GM10248 (cell line): ENCODE measurements at regions of chr1 and their contacts with region 1.

Region 1: DNA sequence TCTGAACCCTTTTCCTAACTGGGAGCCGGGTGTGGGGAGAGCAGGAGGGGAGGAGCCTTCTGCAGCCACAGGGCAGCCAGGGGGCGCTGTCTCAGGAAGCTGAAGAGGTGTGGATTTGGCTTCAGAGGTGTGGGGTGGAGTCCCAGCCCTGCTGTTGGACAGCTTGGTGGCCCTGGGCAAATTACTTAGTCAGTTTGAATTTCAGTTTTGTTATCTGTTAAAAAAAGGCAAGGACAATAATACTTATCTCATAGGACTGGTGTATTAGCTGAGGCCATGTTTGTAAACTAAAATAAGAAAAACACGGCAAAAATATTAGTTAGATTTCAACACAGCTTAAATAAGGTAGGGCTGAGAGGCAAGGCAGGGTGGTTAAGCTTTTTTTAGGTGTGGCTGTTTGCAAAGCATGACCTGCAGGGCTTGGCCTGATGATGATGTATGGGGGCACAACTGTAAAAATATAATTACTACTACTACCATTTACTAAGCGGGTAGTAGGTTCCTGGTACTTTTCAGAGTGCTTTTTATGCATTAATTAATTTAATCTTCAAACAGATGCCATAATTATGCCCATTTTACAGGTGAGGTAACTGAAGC is 111.8 kb downstream of the PLXNA2 start:
- DNase-seq: peak; percentile 84
- CTCF ChIP-seq: peak; percentile 86

Region 2: DNA sequence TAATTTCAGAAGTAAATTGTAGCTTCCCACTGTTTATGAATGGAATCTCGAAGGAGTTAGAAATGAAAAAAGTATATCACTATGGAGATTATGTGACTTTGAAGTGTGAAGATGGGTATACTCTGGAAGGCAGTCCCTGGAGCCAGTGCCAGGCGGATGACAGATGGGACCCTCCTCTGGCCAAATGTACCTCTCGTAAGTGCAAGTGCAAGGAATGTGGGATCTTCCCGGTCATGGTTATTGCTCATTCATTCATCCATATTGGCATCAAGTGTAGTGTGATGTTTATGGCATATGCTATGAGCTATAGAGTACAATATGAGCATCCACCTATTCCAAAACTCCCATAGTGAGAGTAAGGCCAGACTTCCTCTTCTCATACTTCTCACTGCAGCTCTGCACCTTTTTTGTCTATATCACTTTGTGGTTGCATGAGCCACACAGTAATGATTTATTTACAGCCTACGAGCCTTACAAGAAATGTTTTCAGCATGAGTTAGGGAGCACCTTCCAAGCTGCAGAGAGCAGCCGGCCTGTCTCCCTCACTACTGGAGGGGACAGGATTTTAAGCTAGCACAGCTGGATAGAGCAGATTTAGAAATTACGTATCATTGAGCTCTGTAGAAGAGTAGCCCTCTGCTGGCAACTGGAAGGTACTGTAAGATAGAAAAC is 512.4 kb before region 1 on chr1:
- CTCF ChIA-PET with region 1: no interaction called
- POLR2A ChIA-PET with region 1: no interaction called
- DNase-seq: peak; percentile 43
- CTCF ChIP-seq: peak; percentile 59

Region 3: DNA sequence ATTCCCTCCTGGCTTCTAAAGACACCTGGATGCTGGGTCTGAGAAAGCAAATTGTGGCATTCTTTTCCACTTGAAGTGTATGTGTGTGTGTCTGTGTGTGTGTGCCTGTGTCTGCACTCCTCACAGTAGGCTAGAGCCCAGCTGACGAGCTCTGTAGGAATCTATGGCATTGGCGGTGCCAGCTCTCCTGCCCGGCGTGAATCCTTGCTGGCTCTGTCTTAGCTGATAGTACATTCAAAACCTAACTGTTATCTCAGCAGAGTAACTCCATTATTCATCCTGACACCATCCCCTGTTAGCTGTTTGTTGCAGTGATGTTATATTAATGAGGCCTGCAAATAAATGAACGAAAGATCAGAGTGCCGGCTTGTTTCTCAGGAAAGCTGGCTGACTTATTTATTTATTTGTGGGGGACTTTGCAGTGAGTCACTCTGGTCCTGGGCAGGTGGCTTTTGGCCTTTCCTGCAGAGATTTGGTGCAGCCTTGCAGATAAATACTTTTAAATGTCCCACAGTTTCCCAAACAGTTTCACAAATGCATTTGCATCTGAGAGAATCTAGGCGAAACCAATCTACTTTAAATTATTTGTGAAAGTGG is 60.9 kb before region 1 on chr1:
- CTCF ChIA-PET with region 1: no interaction called
- POLR2A ChIA-PET with region 1: no interaction called
- DNase-seq: no peak
- CTCF ChIP-seq: no peak

Region 4: DNA sequence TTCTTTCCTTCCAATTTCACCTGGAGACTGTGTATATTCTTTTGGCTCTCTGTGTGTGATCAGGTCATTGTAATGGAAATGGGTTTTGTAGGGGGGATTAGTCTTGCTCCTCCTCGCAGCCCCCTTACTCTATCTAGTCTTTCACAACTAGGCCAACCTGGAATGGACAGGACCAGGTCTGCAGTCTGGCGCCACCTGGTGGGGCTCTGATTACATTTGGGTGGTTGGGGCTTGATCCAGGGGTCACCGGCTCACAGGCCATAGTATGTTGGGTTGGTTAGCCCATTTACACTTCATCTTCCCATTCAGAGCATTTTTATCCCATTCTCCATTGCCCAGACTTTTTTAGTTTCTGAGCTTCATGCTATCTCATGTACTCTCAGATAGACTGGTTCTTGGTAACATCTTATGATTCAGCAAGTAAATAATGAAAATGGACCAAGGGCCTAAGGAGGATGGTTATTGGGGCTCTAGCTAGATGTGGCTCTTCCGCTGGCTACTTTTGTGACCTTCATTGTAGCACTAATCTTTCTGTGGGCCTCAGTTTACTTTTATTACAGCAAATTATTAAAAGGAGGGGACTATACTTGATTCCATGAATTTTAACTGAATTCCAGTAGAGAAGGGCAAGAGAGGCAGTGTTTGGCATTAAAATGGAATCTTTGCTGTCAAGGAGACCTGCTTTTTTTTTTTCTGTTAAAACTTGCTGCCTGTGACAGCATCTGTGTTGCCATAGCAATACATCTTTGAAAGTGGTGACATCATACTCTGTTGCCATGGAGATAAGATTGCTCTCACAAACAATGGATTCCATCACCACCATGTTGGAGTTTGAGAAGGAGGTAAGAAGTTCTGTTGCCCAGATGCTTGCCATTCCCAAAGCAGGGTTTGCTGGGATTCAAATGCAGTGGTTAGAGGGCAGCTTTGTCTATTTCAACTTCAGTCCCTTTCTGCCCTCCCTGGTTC is 38.3 kb before region 1 on chr1:
- CTCF ChIA-PET with region 1: interaction called, 26 read pairs
- POLR2A ChIA-PET with region 1: no interaction called
- DNase-seq: peak; percentile 72
- CTCF ChIP-seq: peak; percentile 84

Region 5: DNA sequence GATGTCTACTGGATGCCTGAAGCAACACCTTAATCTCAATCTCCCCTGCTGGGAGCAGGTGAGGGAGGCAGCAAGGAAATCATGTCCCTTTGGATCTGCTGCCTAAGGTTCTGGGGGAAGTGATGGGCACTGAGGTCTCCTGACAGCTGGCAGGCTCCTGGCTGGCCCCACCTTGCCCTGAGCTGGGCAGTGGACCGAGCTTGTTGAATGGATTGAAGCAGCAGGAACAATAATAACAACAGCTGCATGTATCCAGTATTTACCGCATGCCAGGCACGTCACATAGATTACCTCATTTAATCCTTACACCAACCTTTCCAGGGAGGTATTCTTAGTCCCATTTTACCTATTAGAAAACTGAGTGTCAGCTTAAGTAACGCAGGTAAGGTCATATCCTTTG is 22.1 kb before region 1 on chr1:
- CTCF ChIA-PET with region 1: interaction called, 10 read pairs
- POLR2A ChIA-PET with region 1: no interaction called
- DNase-seq: no peak
- CTCF ChIP-seq: no peak

Region 6: DNA sequence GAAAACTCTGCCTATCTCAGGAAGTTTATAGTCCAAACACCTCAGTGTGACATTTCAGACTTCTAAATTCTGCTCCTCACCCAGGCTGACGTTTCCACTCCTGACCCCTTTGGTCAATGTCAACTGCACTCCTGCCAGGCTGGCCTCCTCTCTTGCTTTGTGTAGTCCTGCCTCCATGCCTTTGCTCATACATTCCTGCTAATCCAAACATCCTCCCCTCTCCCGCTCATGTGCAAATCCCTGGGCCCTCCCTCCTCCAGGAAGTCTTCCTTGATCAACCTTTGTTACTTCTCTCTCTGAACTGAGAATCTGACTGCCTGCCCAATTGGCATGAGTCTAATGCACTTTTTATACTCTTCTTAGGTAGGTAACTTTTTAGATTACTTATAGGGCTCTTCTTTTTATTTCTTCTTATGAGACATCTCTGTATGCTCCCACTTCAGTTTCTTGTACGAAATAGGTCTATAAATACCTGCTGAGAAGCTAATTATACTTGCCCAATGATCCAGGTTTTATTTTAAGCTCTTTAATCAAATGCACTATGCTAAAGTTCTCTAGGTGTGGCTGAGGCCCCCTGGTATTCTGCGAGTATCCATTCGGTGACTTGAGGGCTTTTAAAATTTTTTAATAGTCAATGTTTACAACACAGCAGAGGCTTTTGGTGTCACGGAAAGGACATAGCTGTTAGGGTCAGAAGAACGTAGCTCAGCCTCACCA is 16.3 kb before region 1 on chr1:
- CTCF ChIA-PET with region 1: interaction called, 42 read pairs
- POLR2A ChIA-PET with region 1: no interaction called
- DNase-seq: no peak
- CTCF ChIP-seq: no peak

Region 7: DNA sequence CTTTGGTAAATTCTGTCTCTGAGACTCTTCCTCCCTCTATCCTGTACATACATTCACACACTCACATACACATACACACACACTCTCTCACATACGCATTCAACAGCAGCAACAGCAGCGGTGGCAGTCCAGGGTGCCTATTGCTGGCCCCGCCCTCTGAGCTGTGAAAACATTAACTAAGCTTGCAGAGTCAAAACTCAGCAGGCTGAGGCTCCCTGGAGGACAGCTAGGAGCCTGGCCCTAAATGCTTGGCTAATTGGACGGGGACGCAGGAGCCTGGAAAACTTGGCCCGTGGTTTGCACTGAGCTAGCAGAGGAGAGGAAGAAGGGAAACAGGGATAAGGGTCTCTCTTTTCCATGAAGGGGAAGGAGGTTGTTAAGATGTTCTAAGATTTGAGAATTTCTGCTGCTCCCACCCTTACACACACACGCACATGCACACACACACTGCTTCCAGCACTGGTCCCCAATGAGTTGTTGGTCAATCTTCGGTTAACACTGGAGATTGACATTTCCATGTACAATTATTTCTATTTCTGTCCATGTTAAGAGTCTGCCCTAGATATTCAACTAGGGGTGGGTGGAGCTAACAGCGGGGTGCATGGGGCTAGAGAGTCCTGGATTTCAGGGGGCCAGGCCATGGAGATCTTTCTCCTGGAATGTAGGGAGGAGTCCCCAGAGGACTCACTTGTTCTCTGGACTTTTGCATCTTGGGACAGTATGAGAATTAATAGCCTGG is 17.6 kb after region 1 on chr1:
- CTCF ChIA-PET with region 1: interaction called, 48 read pairs
- POLR2A ChIA-PET with region 1: no interaction called
- DNase-seq: no peak
- CTCF ChIP-seq: no peak

Region 8: GRCh38 chr1:208203127-208203847 is 70.9 kb after region 1 on chr1:
- CTCF ChIA-PET with region 1: interaction called, 15 read pairs
- POLR2A ChIA-PET with region 1: no interaction called
- DNase-seq: no peak
- CTCF ChIP-seq: no peak

Region 9: DNA sequence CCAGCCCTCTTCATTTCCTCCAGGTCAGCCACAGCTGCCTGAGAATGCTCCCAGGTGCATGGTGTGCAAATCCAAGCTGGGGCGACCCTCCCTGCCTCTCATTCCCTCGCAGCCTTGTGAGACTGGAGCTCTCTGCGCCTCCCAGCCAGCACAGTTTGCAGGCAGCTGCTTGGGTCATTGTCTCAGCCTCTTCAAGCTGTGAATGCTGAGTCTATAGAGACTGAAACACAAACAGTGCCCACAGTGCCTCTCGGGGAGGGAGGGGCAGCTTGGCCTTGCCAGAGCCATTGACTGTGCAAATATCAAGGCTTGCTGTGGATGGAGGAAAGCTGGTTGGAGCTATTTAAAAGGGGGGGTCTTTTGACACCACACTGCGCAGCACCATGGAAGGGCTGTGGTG is 101.2 kb after region 1 on chr1:
- CTCF ChIA-PET with region 1: interaction called, 187 read pairs
- POLR2A ChIA-PET with region 1: no interaction called
- DNase-seq: no peak
- CTCF ChIP-seq: no peak

Region 10: GRCh38 chr1:208318150-208318734 is 185.9 kb after region 1 on chr1:
- CTCF ChIA-PET with region 1: no interaction called
- POLR2A ChIA-PET with region 1: no interaction called
- DNase-seq: no peak
- CTCF ChIP-seq: no peak

Region 11: DNA sequence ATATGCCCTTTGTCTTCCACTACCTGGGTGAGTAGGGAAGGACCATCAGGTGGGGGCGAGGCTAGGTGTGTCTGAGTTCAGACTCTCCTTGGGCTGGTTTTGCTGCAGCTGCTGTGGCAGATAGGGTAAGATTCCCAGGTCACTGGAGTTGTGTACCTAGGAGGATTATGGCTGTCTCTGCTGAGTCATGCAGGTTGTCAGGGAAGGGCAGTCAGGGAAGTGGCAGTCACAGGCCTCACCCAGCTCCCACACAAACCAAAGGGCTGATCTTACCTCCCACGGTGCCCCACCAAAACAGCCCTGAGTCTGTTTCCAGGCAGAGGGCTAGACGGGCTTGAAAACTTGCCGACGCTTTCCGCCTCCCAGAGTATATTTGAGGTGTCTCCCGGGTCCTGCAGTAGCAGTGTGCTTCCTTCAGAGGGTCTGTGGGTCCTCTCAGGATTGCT is 313.4 kb after region 1 on chr1:
- CTCF ChIA-PET with region 1: no interaction called
- POLR2A ChIA-PET with region 1: no interaction called
- DNase-seq: no peak
- CTCF ChIP-seq: no peak